OCI-LY7 (cell line): ENCODE measurements at regions of chr11 and their contacts with region 1.

Region 1: DNA sequence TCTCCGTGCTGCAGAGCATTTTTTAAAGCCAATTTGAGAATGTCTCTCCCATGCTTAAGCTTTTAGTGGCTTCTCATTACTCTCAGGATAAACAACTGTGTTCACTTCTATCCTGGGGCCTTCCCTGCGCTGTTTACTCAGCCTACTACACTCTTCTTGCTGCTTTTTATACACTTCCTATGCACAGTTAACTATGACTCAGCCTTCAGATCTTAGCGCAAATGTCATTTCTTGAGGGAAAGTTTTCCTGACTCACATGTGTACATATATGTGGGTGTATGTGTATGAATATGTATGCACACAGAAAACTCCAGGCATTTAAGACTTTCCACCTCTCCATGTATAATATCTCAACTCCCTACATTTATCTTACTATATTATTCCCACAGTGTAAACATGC is 9.8 kb downstream of the THAP12 start:
- DNase-seq: no peak
- H3K4me3 ChIP-seq: no peak overlapping the region
- H3K27ac ChIP-seq: no peak overlapping the region
- H3K4me1 ChIP-seq: peaks cover 18% of the 10 kb centered on the region
- CTCF ChIP-seq: no peak

Region 2: DNA sequence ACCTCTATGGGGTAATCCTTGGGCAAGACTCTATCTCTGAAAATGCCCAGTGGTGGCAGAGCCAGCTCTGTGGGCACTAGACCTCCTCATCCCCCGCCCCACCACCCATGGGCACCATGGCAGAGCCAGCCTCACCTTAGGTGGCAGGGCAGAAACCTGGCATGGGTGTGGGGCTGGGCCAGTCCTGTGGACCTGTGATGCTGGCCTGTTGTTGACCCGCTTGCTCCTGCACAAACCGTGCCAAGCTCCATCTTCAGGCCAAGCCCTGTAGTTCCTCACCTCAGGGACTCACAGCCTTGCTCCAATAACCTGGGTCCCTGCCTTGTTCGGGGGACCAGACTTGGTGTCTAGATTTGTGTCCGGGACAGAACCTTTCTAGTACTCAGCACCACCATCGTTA is 818.0 kb before region 1 on chr11:
- CTCF ChIA-PET with region 1: no interaction called
- POLR2A ChIA-PET with region 1: interaction called, 12 read pairs
- intact Hi-C with region 1: no loop called
- DNase-seq: no peak
- H3K4me3 ChIP-seq: no peak overlapping the region
- H3K27ac ChIP-seq: no peak overlapping the region
- H3K4me1 ChIP-seq: no peaks in the 10 kb centered on the region
- CTCF ChIP-seq: no peak

Region 3: DNA sequence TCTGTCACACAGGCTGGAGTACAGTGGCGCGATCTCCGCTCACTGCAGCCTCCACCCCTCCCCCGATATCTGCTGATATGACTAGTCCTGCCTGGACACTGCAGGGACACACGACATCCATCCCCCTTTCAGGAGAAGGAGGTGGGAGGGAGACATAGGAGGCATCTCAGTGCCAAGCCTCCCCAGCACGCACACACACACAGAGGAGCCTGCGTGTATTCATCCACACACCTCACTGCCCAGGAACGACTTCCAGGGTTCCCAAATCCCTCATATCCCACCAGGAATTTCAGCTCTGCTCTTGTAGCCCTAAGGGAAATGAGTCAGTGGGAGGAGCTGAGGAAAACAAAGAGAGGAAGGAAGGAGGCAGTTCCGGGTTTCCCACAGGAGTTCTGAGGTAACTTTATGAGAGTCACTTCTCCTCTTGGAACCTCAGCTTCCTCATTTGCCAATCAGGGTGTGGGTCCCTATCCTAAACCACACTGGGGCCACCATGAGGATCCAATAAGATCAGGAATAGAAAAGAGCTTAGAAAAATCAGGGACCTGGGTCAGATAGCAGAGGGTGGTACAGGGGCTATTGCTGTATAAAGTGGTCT is 452.4 kb after region 1 on chr11:
- CTCF ChIA-PET with region 1: no interaction called
- POLR2A ChIA-PET with region 1: no interaction called
- intact Hi-C with region 1: no loop called
- DNase-seq: no peak
- H3K4me3 ChIP-seq: no peak overlapping the region
- H3K27ac ChIP-seq: no peak overlapping the region
- H3K4me1 ChIP-seq: peaks cover 6% of the 10 kb centered on the region
- CTCF ChIP-seq: no peak